ENCODE measurements at regions of chr17 and their contacts with region 1.

Region 1: DNA sequence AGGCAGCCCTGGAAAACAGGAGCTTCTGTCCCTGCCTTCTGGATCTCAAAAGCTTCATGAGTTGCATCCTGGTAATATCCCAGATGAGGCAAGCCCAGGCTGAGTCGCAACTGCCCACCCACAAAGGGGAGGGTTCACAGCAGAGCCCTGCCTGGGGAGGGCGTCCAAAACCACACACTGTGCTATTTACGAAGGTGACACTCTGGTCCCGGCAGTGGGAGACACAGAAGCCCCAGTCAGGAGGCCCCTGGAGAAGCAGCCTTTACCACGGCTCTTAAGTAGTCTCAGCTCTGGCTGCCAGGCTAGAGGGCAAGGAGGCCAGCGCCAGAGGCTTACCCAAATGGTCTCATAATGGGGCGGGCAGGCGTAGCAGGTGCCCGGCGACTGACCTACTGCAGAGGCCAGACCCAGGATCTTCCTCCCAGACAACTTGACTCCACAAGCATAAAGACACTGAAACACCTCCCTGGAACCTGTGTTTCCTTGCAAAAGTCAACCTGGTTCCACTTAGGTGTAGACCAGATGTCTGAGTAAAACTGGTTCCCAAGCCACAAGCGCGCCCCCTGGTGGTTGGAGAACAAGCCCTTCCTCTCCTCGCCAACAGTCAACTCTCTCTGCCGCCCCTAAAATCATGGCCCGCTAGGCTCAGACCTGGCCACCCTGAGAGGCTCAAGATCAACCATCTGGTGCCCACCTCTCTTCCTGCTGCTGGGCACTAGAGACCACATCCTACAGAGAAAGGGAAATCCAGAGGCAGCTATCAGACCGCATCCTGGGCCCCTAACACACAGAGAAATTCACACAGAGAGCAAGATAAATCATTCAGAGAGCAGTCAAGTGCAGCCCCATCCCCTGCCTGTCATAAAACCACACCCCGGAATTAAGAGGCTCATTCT is 5.2 kb downstream of the AXIN2 start:
- DNase-seq: peak; percentile 80
- ATAC-seq: peak; percentile 9; the same call in 1 of the 2 replicates
- H3K4me3 ChIP-seq: no peak overlapping the region
- H3K27ac ChIP-seq: no peak overlapping the region
- H3K4me1 ChIP-seq: 0 out of 2 replicates have a peak, but pooled peaks cover 3% of the 10 kb centered on the region
- H3K27me3 ChIP-seq: peaks cover 10% of the 10 kb centered on the region
- CTCF ChIP-seq: peak; percentile 96

Region 2: DNA sequence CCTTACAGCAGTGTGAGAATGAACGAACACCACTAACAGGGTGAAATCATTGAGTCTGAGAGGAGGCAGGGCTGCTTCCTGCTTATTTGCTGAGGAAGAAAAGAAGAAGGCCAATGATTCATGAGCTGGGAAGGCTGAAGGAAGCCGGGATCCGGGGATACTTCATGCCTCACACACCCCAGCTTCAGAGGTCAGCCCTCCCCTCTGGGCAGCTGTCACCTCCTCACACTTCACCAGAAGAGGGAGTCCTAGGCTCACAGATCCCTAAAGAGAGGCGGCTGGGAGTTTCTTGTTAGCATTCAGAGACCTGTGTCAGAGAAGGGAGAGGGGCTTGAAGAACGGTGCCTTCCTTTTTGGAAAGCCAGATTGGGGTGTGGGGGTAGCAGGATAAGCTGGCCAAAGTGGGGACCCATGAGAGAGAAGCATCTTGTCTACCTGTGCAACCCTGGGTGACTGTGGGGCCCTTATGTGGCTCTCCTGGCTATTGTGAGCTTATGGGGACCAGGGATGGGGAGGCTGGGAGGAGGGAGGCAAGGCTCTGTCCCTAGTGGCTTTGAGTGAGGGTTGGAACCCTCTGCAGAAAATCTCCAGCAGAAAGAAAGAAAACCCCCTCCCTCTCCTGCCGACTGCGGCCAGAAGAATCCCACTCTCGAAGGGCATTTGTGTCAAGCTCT is 324.5 kb before region 1 on chr17:
- CTCF ChIA-PET with region 1: no interaction called
- POLR2A ChIA-PET with region 1: no interaction called
- intact Hi-C with region 1: loop called (anchors 5 kb)
- DNase-seq: peak; percentile 91
- ATAC-seq: peak; percentile 90
- H3K4me3 ChIP-seq: no peak overlapping the region
- H3K27ac ChIP-seq: no peak overlapping the region
- H3K4me1 ChIP-seq: peaks cover 33% of the 10 kb centered on the region
- H3K27me3 ChIP-seq: no peaks in the 10 kb centered on the region
- CTCF ChIP-seq: peak; percentile 98

Region 3: GRCh38 chr17:65294179-65294720 is 262.0 kb before region 1 on chr17:
- CTCF ChIA-PET with region 1: interaction called, 4 read pairs
- POLR2A ChIA-PET with region 1: no interaction called
- intact Hi-C with region 1: loop called (anchors 1 kb)
- DNase-seq: peak; percentile 83
- ATAC-seq: peak; percentile 98
- H3K4me3 ChIP-seq: no peak overlapping the region
- H3K27ac ChIP-seq: no peak overlapping the region
- H3K4me1 ChIP-seq: no peaks in the 10 kb centered on the region
- H3K27me3 ChIP-seq: no peaks in the 10 kb centered on the region
- CTCF ChIP-seq: peak; percentile 99

Region 4: DNA sequence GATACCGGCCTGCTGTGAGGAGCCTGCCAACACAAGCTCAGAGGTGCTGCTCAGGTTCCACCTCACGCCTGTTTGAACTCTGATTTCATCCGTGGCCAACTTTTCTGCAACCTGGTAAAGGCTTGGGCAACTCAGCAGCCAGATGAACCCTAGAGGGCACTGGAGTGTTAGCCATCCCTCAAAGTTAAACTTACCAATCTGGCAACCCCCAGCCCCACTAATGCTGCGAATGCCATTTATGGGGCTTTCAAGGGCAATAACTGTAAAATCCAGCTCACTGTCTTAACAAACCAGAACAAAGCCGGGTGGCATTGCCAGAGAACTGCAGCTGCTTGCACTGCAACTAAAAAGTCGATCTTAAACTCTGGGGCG is 100.3 kb before region 1 on chr17:
- CTCF ChIA-PET with region 1: no interaction called
- POLR2A ChIA-PET with region 1: no interaction called
- intact Hi-C with region 1: loop called (anchors 5 kb)
- DNase-seq: peak; percentile 43
- ATAC-seq: peak; percentile 64
- H3K4me3 ChIP-seq: no peak overlapping the region
- H3K27ac ChIP-seq: no peak overlapping the region
- H3K4me1 ChIP-seq: no peaks in the 10 kb centered on the region
- H3K27me3 ChIP-seq: 0 out of 2 replicates have a peak, but pooled peaks cover 2% of the 10 kb centered on the region
- CTCF ChIP-seq: peak; percentile 59

Region 5: GRCh38 chr17:65593092-65593854 is 37.0 kb after region 1 on chr17:
- CTCF ChIA-PET with region 1: no interaction called
- POLR2A ChIA-PET with region 1: no interaction called
- intact Hi-C with region 1: no loop called
- DNase-seq: no peak
- ATAC-seq: no peak
- H3K4me3 ChIP-seq: no peak overlapping the region
- H3K27ac ChIP-seq: no peak overlapping the region
- H3K4me1 ChIP-seq: no peaks in the 10 kb centered on the region
- H3K27me3 ChIP-seq: no peaks in the 10 kb centered on the region
- CTCF ChIP-seq: no peak

Region 6: DNA sequence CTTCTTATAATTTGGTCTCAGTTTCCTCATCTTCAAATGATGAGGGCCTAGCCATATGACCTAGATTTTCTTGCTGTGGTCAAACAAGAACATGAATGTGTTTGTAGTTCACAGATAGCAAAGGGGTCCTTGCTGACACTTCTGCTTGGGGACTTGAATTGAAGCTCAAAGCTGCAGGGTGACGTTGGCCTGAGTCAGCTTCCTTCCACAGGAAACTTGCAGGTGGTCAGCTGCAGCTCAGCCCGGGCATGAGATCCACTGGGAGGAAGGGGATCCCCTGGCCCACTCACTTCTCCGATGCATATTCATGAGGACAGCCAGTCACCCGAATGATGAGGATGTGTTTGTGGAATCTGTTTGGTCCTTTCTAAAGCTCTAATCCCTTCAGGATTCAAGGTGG is 47.8 kb after region 1 on chr17:
- CTCF ChIA-PET with region 1: interaction called, 17 read pairs
- POLR2A ChIA-PET with region 1: no interaction called
- intact Hi-C with region 1: no loop called
- DNase-seq: peak; percentile 68
- ATAC-seq: peak; percentile 93
- H3K4me3 ChIP-seq: no peak overlapping the region
- H3K27ac ChIP-seq: no peak overlapping the region
- H3K4me1 ChIP-seq: peaks cover 11% of the 10 kb centered on the region
- H3K27me3 ChIP-seq: no peaks in the 10 kb centered on the region
- CTCF ChIP-seq: no peak